PC-3 (cell line): ENCODE measurements at regions of chrX and their contacts with region 1.

Region 1: GRCh38 chrX:68196939-68197791 is 236.1 kb downstream of the OPHN1 start:
- DNase-seq: peak; percentile 83
- ATAC-seq: peak; percentile 69
- H3K4me3 ChIP-seq: no peak overlapping the region
- H3K27ac ChIP-seq: no peak overlapping the region
- H3K4me1 ChIP-seq: peaks cover 16% of the 10 kb centered on the region
- H3K27me3 ChIP-seq: no peaks in the 10 kb centered on the region
- CTCF ChIP-seq: peak; percentile 83

Region 2: GRCh38 chrX:68299898-68300297 is 102.7 kb after region 1 on chrX:
- CTCF ChIA-PET with region 1: no interaction called
- POLR2A ChIA-PET with region 1: interaction called, 3 read pairs
- intact Hi-C with region 1: loop called (anchors 5 kb)
- DNase-seq: no peak
- ATAC-seq: no peak
- H3K4me3 ChIP-seq: no peak overlapping the region
- H3K27ac ChIP-seq: no peak overlapping the region
- H3K4me1 ChIP-seq: peaks cover 11% of the 10 kb centered on the region
- H3K27me3 ChIP-seq: no peaks in the 10 kb centered on the region
- CTCF ChIP-seq: no peak

Region 3: GRCh38 chrX:68433155-68433980 is 236.2 kb after region 1 on chrX and contains the start of gene OPHN1:
- CTCF ChIA-PET with region 1: no interaction called
- POLR2A ChIA-PET with region 1: interaction called, 10 read pairs
- intact Hi-C with region 1: loop called (anchors 1 kb)
- DNase-seq: peak; percentile 88
- ATAC-seq: peak; percentile 87
- H3K4me3 ChIP-seq: peak within 1 kb of the TSS; percentile 91
- H3K27ac ChIP-seq: peak within 1 kb of the TSS; percentile 84
- H3K4me1 ChIP-seq: peaks cover 32% of the 10 kb centered on the region
- H3K27me3 ChIP-seq: no peaks in the 10 kb centered on the region
- CTCF ChIP-seq: no peak
- total RNA-seq, gene OPHN1: 6.0 and 8.6 TPM in 2 replicates

Region 4: GRCh38 chrX:68490599-68490998 is 293.4 kb after region 1 on chrX:
- CTCF ChIA-PET with region 1: interaction called, 9 read pairs
- POLR2A ChIA-PET with region 1: no interaction called
- intact Hi-C with region 1: loop called (anchors 1 kb)
- DNase-seq: peak; percentile 62
- ATAC-seq: peak; percentile 88
- H3K4me3 ChIP-seq: no peak overlapping the region
- H3K27ac ChIP-seq: peak overlapping the region; percentile 37
- H3K4me1 ChIP-seq: peaks cover 14% of the 10 kb centered on the region
- H3K27me3 ChIP-seq: no peaks in the 10 kb centered on the region
- CTCF ChIP-seq: peak; percentile 62

Region 5: GRCh38 chrX:68710870-68711576 is 513.9 kb after region 1 on chrX:
- CTCF ChIA-PET with region 1: interaction called, 5 read pairs
- POLR2A ChIA-PET with region 1: no interaction called
- intact Hi-C with region 1: loop called (anchors 1 kb)
- DNase-seq: peak; percentile 65
- ATAC-seq: peak; percentile 94
- H3K4me3 ChIP-seq: no peak overlapping the region
- H3K27ac ChIP-seq: no peak overlapping the region
- H3K4me1 ChIP-seq: no peaks in the 10 kb centered on the region
- H3K27me3 ChIP-seq: no peaks in the 10 kb centered on the region
- CTCF ChIP-seq: peak; percentile 77